Posterior vena cava (tissue), 2 donors: ENCODE measurements at regions of chr2 and their contacts with region 1.

Region 1: GRCh38 chr2:11773747-11774525 is 27.5 kb downstream of the LPIN1 start:
- DNase-seq: no peak

Region 2: DNA sequence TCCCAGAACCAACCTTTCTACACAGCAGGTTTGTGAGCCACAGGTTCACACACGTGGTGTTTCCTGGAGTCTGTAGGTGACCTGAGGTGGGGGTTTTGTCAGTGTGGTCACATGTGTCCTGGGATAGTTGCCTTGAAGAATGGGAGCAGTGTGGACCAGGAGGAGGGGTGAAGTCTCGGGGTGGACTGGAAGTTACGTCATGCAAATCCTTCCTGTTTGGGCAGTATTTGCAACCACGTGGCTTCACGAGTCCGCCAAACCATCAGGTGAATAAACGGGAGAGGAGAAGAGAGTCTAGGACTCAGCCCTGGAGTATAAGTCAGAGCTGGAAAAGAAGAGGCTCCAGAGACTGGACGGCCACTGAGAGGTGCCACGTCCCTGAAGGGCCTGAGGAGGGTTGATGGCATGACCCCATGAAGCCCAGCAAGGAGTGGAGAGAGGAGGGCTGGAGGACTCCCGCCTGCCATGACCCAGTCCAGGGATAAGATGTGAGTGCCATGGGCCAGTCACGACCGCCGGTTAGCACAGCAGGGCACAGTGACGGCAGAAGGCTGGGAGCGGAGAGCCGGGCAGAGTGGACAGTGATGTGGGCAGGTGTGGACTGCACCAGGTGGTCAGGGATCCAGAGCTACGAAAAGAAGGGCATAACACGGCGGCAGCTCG is 11.0 kb before region 1 on chr2:
- intact Hi-C with region 1: loop called in 1 of 2 experiments (anchors 1 kb)
- DNase-seq: peak; percentile 78